RWPE1 (cell line): ENCODE measurements at regions of chr16 and their contacts with region 1.

Region 1: DNA sequence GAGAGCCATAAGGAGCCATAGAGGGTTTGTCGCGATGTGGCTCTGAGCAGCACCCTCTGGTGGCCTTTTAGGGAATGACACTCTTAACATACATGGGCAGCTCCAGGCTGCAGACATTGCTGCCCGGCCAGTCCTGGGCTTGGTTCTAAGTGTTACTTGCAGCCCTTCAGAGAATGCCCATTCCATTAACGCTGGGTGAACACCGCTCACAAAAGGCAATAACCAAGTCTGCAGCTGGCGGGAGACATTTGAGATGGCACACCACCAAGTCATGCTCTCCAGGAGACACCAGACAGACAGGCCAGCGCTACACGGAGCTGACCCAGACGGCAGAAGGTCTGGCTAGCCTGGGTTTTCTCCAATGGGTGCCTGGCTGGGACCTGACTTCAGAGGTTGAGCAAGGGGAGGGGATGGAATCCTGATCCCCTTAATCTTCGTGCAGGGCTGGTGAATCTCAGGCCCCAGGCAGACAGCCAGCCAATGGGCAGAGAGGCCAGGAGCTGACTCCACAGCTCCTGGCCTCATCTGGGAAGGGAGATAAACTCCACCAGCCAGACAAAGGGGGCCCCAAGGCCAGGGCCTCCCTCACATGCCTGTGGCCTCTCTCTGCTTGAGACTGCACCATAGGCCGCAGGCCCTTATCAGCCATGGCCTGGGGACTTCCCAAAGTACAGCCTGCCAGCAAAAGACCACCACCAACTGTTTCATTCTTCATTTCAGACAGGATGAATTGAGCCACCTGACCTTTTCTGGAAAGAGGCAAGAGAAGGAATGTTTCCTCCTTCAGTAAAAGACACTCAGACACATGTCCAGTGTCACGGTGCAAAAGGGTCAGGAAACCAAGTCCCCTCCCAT is 58.8 kb downstream of the ZDHHC7 start:
- DNase-seq: peak; percentile 77
- H3K27ac ChIP-seq: no peak overlapping the region
- CTCF ChIP-seq: peak; percentile 84

Region 2: DNA sequence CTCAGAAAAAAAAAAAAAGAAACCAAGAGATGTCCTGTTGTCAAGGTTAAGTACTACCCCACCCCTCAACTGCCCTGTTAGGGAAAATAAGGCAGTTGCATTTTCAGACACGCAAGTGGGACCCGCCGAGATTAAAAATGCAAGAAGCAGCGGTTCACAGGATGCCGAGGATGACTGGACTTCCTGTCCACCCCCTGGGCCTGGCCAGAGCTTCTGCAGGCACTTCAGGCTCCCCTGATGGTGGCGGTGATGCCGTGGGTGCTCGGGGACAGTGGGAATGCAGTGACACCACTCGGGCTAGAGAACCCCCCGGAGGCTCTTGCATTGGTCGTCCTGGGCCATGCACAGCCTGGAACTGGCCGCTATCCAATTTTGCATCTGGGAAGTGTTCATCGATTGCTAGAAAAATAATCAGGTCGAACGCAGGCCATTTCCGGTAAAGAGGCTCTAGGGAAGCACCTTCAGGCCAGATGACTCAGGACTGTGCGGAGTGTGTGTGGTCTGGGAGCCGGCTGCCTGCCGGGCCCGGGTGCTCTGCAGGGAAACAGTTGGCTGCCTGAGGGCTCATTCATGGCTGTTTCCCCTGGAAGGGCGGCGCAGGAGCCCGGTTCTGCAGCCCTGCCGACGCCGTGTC is 146.2 kb before region 1 on chr16:
- CTCF ChIA-PET with region 1: no interaction called
- POLR2A ChIA-PET with region 1: no interaction called
- DNase-seq: peak; percentile 78
- H3K27ac ChIP-seq: no peak overlapping the region
- CTCF ChIP-seq: no peak

Region 3: DNA sequence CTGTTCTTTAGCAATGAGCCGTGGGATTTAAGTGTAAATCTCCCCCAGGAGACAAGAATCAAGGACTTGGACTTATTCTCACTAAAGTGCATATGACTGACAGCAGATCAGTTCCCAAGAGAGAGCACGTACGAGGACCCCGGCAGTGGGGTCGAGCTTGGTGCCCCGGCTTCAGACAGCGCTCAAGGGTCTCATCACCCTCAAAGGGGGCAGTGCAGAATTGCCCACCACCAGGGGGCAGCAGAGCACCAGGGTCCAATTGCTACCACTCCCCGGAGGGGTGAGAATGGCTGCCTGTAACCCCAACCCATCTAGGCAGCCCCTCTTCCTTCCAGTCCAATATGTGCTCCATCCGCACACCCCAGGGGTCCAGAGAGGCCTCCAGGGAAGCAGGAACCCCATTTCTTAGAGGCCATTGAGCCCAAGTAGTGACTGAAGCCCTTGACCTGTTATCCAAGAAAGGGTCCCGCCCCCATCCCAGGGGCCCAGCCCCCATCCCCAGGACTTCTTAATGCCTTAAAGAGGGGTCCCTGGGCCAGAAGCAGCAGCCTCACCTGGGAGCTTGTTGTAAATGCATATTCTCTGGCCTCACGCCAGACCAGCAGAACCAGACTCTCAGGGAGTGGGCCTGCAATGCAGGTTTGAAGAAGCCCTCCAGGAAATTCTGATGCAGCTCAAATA is 27.3 kb before region 1 on chr16:
- CTCF ChIA-PET with region 1: interaction called, 23 read pairs
- POLR2A ChIA-PET with region 1: no interaction called
- DNase-seq: peak; percentile 58
- H3K27ac ChIP-seq: no peak overlapping the region
- CTCF ChIP-seq: peak; percentile 73

Region 4: DNA sequence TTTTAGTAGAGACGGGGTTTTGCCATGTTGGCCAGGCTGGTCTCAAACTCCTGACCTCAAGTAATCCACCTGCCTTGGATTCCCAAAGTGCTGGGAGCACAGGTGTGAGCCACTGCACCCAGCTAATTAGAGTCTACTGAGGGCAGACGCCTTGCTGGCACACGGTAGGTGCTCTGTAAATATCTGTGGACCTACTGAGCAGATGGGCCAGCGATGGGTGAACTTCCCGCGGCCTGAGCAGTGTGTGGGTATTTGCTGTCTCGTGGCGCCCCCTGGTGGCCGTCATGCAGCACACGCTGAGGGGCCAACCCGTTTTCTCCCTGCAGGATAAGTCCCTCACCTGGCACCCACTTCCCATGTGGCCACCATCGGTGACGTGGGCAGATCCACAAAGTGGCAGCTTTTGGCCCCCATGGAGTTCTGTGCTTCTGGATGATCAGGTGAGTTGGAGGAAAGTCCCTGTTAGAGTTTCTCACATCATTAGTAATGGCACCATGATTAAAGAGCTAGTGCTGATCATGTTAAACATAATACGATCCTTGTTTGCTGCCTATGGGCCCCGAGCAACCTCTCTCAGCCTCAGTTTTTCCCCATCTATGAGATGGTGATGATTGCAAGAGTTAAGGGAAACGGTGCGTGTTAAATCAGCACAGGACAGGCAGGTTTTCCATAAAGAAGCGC is 18.0 kb after region 1 on chr16:
- CTCF ChIA-PET with region 1: interaction called, 11 read pairs
- POLR2A ChIA-PET with region 1: no interaction called
- DNase-seq: peak; percentile 72
- H3K27ac ChIP-seq: no peak overlapping the region
- CTCF ChIP-seq: peak; percentile 93